KBM-7 (cell line): ENCODE measurements at regions of chr5 and their contacts with region 1.

Region 1: DNA sequence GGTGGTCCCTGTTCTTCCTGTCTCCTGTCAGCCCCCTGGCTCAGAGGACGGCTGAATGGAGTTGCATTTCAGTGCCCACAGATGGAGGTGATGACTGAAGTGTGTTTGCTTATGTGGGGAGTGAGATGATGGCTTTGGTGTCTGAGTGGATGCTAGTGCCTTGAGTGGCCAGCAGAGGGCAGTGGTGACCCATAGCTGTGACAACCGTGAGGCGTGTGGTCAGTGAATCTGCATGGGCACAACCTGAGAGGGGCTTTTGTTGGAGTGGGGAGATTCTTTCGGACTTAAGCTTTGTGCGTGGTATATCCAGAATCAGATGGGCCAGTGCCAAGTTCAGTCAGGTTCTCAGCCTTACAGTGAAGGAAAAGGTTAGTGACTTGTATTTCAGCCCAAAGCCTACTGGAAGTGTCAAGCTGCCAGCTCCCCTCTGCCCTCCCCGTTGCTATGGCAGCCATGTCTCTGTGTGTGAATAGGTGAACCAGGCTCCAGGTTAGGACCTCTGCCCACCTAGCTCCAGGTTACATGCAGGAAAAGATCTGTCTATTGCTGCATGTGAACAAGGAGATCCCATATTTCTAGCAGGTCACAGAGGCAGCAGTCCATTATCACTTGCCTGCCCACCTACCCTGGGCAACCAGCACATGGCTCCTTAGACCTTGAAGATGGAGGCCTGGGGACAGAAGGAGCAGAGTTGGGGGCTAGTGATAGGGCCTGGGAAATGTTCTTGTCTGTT is 14.7 kb upstream of the CXXC5 start:
- DNase-seq: peak; percentile 87

Region 2: GRCh38 chr5:139232147-139232724 is 401.2 kb before region 1 on chr5:
- in situ Hi-C with region 1: no loop called
- DNase-seq: peak; percentile 72

Region 3: GRCh38 chr5:139368613-139369012 is 264.8 kb before region 1 on chr5:
- in situ Hi-C with region 1: no loop called
- DNase-seq: peak; percentile 36

Region 4: DNA sequence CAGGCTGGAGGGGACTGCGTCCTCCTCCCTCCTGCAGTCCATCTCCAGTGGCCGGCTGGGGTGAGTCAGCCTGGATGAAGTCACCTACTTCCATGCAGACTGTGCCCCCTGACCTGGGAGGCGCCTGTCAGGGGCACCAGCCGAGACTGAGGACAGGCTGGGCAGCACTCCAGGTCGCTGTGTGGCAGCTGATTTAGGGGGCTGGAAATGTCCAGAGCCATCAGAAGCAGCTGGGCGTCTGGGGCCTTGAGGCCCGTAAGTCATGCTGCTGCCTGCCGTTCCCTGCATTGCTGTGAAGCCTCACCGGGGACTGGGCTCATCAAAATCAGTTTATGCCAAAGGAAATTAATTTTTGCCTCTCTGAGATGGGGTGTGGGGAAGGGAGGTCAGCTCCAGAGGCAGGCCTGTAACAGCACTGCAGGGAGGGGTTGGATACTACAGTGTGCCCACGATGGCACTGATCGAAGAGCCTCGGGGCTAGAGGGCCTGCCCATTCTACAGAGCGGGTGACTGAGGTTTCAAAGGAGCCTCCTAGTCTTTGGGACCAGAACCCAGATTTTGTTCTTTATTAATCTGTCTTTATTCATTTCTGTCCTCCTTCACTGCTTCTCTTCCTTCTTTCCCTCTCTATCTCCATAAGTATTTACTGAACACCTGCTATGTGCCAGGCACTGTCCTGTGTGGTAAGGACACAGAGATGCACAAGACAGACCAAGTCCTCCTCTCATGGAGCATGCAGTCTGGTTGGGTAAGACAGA is 91.8 kb after region 1 on chr5:
- in situ Hi-C with region 1: no loop called
- DNase-seq: no peak

Region 5: GRCh38 chr5:139765409-139766217 is 132.2 kb after region 1 on chr5:
- in situ Hi-C with region 1: loop called (anchors 10 kb)
- DNase-seq: peak; percentile 85